GM12878 (cell line): ENCODE measurements at regions of chr2 and their contacts with region 1.

Region 1: GRCh38 chr2:24382363-24383073 is 22.2 kb upstream of the ITSN2 start:
- DNase-seq: no peak
- ATAC-seq: peak; percentile 98
- H3K4me3 ChIP-seq: no peak overlapping the region
- H3K27ac ChIP-seq: no peak overlapping the region
- H3K4me1 ChIP-seq: no peaks in the 10 kb centered on the region
- H3K27me3 ChIP-seq: no peaks in the 10 kb centered on the region
- CTCF ChIP-seq: peak; percentile 70 to 85 (median 72)
- EP300 ChIP-seq: no peak
- POLR2A ChIP-seq: no peak
- RAD21 ChIP-seq: peak; percentile 97

Region 2: GRCh38 chr2:24228470-24228869 is 154.0 kb before region 1 on chr2:
- CTCF ChIA-PET with region 1: interaction called, 4 read pairs
- POLR2A ChIA-PET with region 1: interaction called, 5 read pairs
- RAD21 ChIA-PET with region 1: interaction called, 3 read pairs
- SMC1A ChIA-PET with region 1: no interaction called
- in situ Hi-C with region 1: no loop called
- intact Hi-C with region 1: loop called (anchors 1 kb)
- DNase-seq: no peak
- ATAC-seq: peak; percentile 67
- H3K4me3 ChIP-seq: no peak overlapping the region
- H3K27ac ChIP-seq: no peak overlapping the region
- H3K4me1 ChIP-seq: no peaks in the 10 kb centered on the region
- H3K27me3 ChIP-seq: no peaks in the 10 kb centered on the region
- CTCF ChIP-seq: peak; percentile 24 to 37 (median 30); a peak in 4 of 6 replicates
- EP300 ChIP-seq: no peak
- POLR2A ChIP-seq: no peak
- RAD21 ChIP-seq: peak; percentile 44; the same call in 1 of the 2 replicates

Region 3: DNA sequence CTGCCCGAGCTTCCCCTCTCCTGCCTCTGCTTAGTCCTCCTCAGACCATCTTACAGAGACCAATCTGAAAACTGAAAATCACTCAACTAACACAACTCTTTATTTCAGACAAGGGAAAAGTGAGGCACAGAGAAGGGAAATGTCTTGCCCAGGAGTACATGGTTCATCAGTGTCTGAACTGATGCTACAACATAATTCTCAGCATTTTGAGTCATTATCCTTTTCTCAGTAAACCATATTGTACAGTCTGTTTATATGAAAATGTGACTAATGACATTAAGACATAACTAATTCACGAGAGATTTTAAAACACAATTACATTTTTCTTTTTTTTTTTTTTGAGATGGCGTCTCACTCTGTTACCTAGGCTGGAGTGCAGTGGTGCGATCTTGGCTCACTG is 84.9 kb before region 1 on chr2:
- CTCF ChIA-PET with region 1: interaction called, 3 read pairs
- POLR2A ChIA-PET with region 1: no interaction called
- RAD21 ChIA-PET with region 1: no interaction called
- SMC1A ChIA-PET with region 1: interaction called, 3 read pairs
- in situ Hi-C with region 1: no loop called
- intact Hi-C with region 1: loop called (anchors 5 kb)
- DNase-seq: no peak
- ATAC-seq: no peak
- H3K4me3 ChIP-seq: no peak overlapping the region
- H3K27ac ChIP-seq: no peak overlapping the region
- H3K4me1 ChIP-seq: no peaks in the 10 kb centered on the region
- H3K27me3 ChIP-seq: no peaks in the 10 kb centered on the region
- CTCF ChIP-seq: no peak
- EP300 ChIP-seq: no peak
- POLR2A ChIP-seq: no peak
- RAD21 ChIP-seq: no peak